AG04449 (cell line): ENCODE measurements at regions of chr6 and their contacts with region 1.

Region 1: GRCh38 chr6:16819752-16820151 is 58.5 kb upstream of the ATXN1 start:
- DNase-seq: no peak
- H3K4me3 ChIP-seq: no peak overlapping the region
- CTCF ChIP-seq: peak; percentile 37

Region 2: GRCh38 chr6:16803294-16804200 is 16.2 kb before region 1 on chr6:
- CTCF ChIA-PET with region 1: interaction called, 13 read pairs
- POLR2A ChIA-PET with region 1: no interaction called
- DNase-seq: peak; percentile 26
- H3K4me3 ChIP-seq: peak overlapping the region; percentile 2; the same call in 1 of the 2 replicates
- CTCF ChIP-seq: no peak